H1 (cell line): ENCODE measurements at regions of chr16 and their contacts with region 1.

Region 1: GRCh38 chr16:31117391-31118197 is at the start of gene KAT8:
- DNase-seq: peak; percentile 90 to 94
- H3K4me3 ChIP-seq: peak within 1 kb of the TSS; percentile 70 to 96 (median 90)
- H3K27ac ChIP-seq: peak within 1 kb of the TSS; percentile 90
- H3K4me1 ChIP-seq: peaks cover 0 to 4% (median 2%) of the 10 kb centered on the region in 4 experiments; a peak in 3 of 7 replicates
- H3K27me3 ChIP-seq: no peaks in the 10 kb centered on the region
- CTCF ChIP-seq: peak in 1 of 3 experiments; percentile 4; a peak in 1 of 4 replicates
- EP300 ChIP-seq: no peak
- POLR2A ChIP-seq: peak; percentile 62 to 95
- RAD21 ChIP-seq: peak in 1 of 2 experiments; percentile 13; a peak in 1 of 4 replicates
- total RNA-seq, gene KAT8: 61.6 and 68.7 TPM in 2 replicates

Region 2: DNA sequence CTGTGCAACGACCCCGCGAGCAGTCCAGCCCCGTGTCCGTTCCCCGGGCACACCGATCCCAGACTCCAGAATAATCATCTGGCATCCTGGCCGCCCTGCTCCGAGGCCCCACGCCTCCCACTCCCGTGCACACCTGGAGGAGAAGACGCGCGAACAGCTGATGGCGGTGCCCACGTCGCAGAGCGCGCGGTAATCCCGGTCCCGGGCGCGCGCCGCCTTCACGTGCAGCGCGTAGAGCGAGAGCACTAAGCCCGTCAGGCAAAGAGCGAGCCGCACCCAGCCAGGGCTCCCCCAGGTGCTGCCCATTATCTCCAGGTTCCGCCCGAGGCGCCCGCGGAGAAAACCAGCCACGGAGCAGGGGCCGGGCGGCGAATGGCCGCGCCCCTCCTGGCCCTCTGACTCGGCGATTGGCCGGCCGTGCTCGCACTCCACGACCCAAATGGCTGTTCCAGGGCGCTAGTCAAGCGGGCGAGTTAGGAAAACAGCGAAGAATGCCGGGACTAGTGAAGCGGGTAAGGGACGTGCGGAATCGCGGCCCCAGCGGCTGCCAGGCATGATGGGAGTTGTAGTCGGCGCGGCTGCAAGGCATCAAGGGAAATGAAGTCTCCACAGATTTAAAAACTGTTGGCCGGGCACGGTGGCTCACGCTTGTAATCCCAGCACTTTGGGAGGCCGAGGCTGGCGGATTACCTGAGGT is 23.0 kb before region 1 on chr16 and contains the start of gene VKORC1:
- CTCF ChIA-PET with region 1: interaction called, 4 read pairs
- POLR2A ChIA-PET with region 1: interaction called, 15 read pairs
- DNase-seq: peak; percentile 90 to 92
- H3K4me3 ChIP-seq: peak within 1 kb of the TSS; percentile 87 to 96 (median 92)
- H3K27ac ChIP-seq: peak within 1 kb of the TSS; percentile 16; the same call in 1 of the 2 replicates
- H3K4me1 ChIP-seq: peaks cover 0 to 9% (median 3%) of the 10 kb centered on the region in 4 experiments; a peak in 4 of 7 replicates
- H3K27me3 ChIP-seq: no peaks in the 10 kb centered on the region
- CTCF ChIP-seq: no peak
- EP300 ChIP-seq: no peak
- POLR2A ChIP-seq: peak in 1 of 2 experiments; percentile 36; a peak in 1 of 3 replicates
- RAD21 ChIP-seq: no peak
- total RNA-seq, gene VKORC1: 83.3 and 84.1 TPM in 2 replicates

Region 3: GRCh38 chr16:31099860-31100638 is 17.5 kb before region 1 on chr16:
- CTCF ChIA-PET with region 1: interaction called, 4 read pairs
- POLR2A ChIA-PET with region 1: interaction called, 10 read pairs
- DNase-seq: no peak
- H3K4me3 ChIP-seq: no peak overlapping the region
- H3K27ac ChIP-seq: no peak overlapping the region
- H3K4me1 ChIP-seq: no peaks in the 10 kb centered on the region
- H3K27me3 ChIP-seq: 0 out of 7 replicates have a peak, but pooled peaks cover 0 to 2% (median 0%) of the 10 kb centered on the region in 4 experiments
- CTCF ChIP-seq: no peak
- EP300 ChIP-seq: no peak
- POLR2A ChIP-seq: no peak
- RAD21 ChIP-seq: no peak

Region 4: DNA sequence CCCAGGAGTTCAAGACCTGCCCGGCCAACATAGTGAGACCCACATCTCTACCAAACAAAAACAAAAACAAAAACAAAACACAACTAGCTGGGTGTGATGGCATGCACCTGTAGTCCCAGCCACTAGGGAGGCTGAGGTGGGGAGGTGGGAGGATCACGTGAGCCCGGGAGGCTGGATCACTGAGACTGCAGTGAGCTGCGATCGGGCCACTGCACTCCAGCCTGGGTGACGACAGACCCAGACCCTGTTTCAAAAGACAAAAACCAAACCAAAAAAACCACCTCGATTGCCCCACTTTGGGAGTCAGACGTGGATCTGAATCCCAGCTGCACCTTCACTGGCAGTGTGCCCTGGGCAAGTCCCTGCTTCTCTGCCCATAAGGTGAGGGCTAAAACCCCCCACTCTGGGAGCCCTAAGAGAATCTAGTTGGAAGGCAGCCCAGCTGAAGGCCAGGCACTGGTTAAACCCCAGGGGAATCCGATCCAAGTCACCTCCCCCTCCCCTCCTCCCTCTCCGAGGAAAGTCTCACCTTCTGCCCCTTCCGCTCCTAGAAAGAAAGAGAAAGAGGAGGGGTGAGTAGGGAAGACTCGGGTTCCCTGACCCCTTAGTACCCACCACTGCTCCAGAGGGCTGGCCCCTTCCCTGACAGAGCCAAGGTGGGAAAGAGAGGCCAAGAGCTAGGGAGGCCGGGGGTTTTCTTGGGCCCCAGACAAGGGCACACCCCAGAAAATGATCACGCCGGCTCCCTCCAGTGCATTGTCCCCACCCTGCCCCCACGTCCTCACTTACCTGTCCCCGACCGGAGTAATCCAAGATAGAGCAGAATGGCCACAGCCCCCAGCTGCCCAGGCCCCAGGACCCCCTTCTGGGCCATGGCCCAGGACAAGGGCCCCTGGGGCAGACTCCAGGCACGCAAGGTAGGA is 17.3 kb after region 1 on chr16:
- CTCF ChIA-PET with region 1: interaction called, 10 read pairs
- POLR2A ChIA-PET with region 1: interaction called, 713 read pairs
- DNase-seq: peak in 1 of 2 experiments; percentile 66
- H3K4me3 ChIP-seq: peak overlapping the region; percentile 65 to 87 (median 81)
- H3K27ac ChIP-seq: peak overlapping the region; percentile 86; the same call in 1 of the 2 replicates
- H3K4me1 ChIP-seq: peaks cover 5 to 54% (median 44%) of the 10 kb centered on the region in 4 experiments
- H3K27me3 ChIP-seq: no peaks in the 10 kb centered on the region
- CTCF ChIP-seq: no peak
- EP300 ChIP-seq: no peak
- POLR2A ChIP-seq: peak in 1 of 2 experiments; percentile 60; a peak in 2 of 3 replicates
- RAD21 ChIP-seq: no peak

Region 5: GRCh38 chr16:31142109-31143010 is 24.8 kb after region 1 on chr16:
- CTCF ChIA-PET with region 1: interaction called, 10 read pairs
- POLR2A ChIA-PET with region 1: interaction called, 713 read pairs
- DNase-seq: peak; percentile 98 to 99
- H3K4me3 ChIP-seq: peak overlapping the region; percentile 10 to 54 (median 24); a peak in 7 of 8 replicates
- H3K27ac ChIP-seq: peak overlapping the region; percentile 48; the same call in 1 of the 2 replicates
- H3K4me1 ChIP-seq: peaks cover 5 to 26% (median 22%) of the 10 kb centered on the region in 4 experiments
- H3K27me3 ChIP-seq: peaks cover 1 to 19% (median 12%) of the 10 kb centered on the region in 4 experiments
- CTCF ChIP-seq: peak; percentile 82 to 95 (median 87)
- EP300 ChIP-seq: 0 out of 3 replicates have a peak, but pooled peaks of 1 of the 2 experiments have one; percentile 45
- POLR2A ChIP-seq: no peak
- RAD21 ChIP-seq: peak; percentile 77 to 85